ENCODE measurements at regions of chr19 and their contacts with region 1.

Region 1: GRCh38 chr19:58278157-58279041 is at the start of gene ZNF8:
- DNase-seq: peak; percentile 93
- ATAC-seq: peak; percentile 97
- H3K4me3 ChIP-seq: peak within 1 kb of the TSS; percentile 75 to 95
- H3K27ac ChIP-seq: peak within 1 kb of the TSS; percentile 98
- H3K4me1 ChIP-seq: peaks cover 17% of the 10 kb centered on the region
- H3K27me3 ChIP-seq: no peaks in the 10 kb centered on the region
- CTCF ChIP-seq: no peak
- total RNA-seq, gene ZNF8: 12.6 TPM

Region 2: DNA sequence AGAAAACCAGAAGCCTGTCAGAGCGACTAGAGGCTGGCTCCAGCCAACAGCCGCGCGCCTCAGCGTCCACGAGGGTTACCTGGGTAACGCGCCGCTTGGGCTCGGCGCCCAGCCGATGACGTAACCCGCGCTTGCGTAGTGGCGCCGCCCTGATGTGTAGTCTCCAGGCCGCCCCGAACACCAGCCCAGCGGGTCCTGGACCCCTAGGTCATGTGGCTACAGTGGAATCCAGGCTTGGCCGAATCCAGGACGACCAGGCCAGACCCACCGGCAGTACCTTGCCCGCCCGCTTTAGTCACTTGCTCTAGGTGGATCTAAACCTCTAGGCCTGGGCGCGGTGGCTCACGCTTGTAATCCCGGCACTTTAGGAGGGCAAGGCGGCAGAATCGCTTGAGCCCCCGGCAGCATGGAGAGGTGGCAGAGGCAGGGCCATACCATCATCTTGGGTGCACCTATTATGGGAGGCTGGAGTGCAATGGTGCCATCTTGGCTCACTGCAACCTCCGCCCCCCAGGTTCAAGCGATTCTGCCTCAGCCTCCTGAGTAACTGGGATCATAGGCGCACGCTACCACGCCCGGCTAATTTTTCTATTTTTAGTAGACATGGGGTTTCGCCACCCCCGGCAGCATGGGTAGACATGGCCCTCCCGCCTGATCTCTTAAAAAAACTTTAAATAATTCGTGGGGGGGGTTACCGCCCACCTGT is 268.6 kb before region 1 on chr19:
- CTCF ChIA-PET with region 1: no interaction called
- POLR2A ChIA-PET with region 1: no interaction called
- in situ Hi-C with region 1: no loop called
- intact Hi-C with region 1: no loop called
- DNase-seq: no peak
- ATAC-seq: no peak
- H3K4me3 ChIP-seq: no peak overlapping the region
- H3K27ac ChIP-seq: no peak overlapping the region
- H3K4me1 ChIP-seq: no peaks in the 10 kb centered on the region
- H3K27me3 ChIP-seq: no peaks in the 10 kb centered on the region
- CTCF ChIP-seq: no peak

Region 3: DNA sequence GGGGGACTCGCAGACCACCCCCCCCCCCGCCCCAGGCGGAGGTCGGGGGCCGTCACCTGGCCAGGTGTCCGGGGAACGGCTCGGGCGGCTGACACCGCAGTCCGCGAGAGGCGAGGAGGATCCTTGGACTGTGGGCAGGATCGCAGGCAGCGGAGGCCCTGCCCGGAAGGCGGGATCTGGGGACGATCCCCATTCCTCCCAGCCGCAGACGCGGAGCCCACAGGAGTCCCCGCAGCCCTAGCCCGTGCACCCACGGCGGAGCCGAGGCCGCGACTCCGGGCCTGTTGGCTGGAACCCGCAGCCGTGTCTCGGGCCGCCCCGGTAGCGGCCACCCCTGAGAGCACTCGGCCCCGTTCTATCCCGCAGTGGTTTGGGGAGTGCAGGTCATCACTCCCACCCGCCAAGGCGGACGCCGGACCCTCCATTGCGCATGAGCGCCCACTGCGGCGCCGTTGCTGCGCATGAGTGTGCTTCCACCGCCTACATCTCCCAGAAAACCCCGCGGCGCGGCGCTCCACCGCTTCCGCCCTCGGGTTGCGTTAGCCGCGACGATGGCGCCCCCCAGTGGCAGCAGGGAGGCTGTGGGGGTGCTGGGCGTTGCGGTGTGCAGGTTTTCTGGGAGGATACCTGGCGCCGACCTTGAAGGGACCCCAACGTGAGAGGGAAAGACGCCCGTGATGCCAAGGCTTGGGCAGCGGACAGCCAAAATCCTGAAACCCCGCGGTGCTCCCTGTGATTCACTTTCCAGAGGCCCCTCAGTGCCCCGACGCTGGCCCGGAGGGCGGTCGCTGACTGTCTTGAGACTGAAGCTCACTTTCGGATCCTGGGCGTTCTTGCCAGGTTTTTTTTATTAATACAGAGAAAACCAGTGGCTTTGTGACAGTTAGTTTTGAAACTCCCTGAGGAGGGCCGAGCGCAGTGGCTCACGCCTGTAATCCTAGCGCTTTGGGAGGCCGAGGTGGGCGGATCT is 123.4 kb before region 1 on chr19:
- CTCF ChIA-PET with region 1: no interaction called
- POLR2A ChIA-PET with region 1: interaction called, 10 read pairs
- in situ Hi-C with region 1: no loop called
- intact Hi-C with region 1: no loop called
- DNase-seq: peak; percentile 10
- ATAC-seq: peak; percentile 84
- H3K4me3 ChIP-seq: peak overlapping the region; percentile 53 to 55
- H3K27ac ChIP-seq: peak overlapping the region; percentile 18; the same call in 1 of the 2 replicates
- H3K4me1 ChIP-seq: no peaks in the 10 kb centered on the region
- H3K27me3 ChIP-seq: no peaks in the 10 kb centered on the region
- CTCF ChIP-seq: peak; percentile 85; the same call in 1 of the 2 replicates

Region 4: DNA sequence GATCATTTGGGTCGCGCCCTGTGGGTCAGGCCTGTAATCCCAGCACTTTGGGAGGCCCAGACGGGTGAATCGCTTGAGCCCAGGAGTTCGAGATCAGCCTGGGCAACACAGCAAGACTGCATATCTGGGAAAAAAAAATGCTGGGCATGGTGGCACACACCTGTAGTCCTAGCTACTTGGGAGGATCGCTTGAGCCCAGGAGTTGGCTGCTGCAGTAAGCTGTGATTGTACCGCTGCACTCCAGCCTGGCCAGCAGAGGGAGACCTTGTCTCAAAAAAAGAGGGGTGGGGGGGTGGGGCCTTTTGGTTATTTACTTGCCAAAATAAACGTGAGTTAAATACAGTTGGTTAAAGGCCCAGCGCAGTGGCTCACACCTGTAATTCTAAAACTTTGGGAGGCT is 59.5 kb before region 1 on chr19:
- CTCF ChIA-PET with region 1: no interaction called
- POLR2A ChIA-PET with region 1: no interaction called
- in situ Hi-C with region 1: no loop called
- intact Hi-C with region 1: no loop called
- DNase-seq: no peak
- ATAC-seq: peak; percentile 66
- H3K4me3 ChIP-seq: no peak overlapping the region
- H3K27ac ChIP-seq: no peak overlapping the region
- H3K4me1 ChIP-seq: no peaks in the 10 kb centered on the region
- H3K27me3 ChIP-seq: no peaks in the 10 kb centered on the region
- CTCF ChIP-seq: no peak

Region 5: GRCh38 chr19:58243351-58243750 is 35.0 kb before region 1 on chr19:
- CTCF ChIA-PET with region 1: no interaction called
- POLR2A ChIA-PET with region 1: interaction called, 11 read pairs
- in situ Hi-C with region 1: no loop called
- intact Hi-C with region 1: no loop called
- DNase-seq: no peak
- ATAC-seq: 0 out of 2 replicates have a peak, but pooled peaks have one; percentile 7
- H3K4me3 ChIP-seq: no peak overlapping the region
- H3K27ac ChIP-seq: no peak overlapping the region
- H3K4me1 ChIP-seq: no peaks in the 10 kb centered on the region
- H3K27me3 ChIP-seq: no peaks in the 10 kb centered on the region
- CTCF ChIP-seq: no peak

Region 6: DNA sequence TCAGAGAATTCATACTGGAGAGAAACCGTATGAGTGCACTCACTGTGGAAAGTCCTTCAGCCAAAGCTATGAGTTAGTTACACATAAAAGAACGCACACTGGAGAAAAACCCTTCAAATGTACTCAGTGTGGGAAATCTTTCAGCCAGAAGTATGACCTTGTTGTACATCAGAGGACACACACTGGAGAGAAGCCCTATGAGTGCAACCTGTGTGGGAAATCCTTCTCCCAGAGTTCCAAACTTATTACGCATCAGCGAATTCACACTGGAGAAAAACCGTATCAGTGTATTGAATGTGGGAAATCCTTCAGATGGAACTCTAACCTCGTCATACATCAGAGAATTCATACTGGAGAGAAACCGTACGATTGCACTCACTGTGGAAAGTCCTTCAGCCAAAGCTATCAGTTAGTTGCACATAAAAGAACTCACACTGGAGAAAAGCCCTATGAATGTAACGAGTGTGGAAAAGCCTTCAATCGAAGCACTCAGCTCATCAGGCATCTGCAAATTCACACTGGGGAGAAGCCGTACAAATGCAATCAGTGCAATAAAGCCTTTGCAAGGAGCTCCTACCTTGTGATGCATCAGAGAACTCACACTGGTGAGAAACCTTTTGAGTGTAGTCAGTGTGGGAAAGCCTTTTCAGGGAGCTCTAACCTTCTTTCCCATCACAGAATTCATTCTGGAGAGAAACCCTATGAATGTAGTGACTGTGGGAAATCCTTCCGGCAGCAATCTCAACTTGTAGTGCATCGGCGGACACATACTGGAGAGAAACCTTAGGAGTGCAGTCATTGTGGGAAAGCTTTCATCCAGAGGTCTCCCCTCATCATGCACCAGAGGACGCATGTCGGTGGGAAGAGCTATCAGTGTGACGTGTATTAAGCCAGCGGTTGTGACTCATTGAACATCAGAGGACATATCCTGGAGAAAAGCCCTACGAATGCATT is 16.2 kb before region 1 on chr19:
- CTCF ChIA-PET with region 1: no interaction called
- POLR2A ChIA-PET with region 1: no interaction called
- in situ Hi-C with region 1: no loop called
- intact Hi-C with region 1: no loop called
- DNase-seq: no peak
- ATAC-seq: no peak
- H3K4me3 ChIP-seq: no peak overlapping the region
- H3K27ac ChIP-seq: no peak overlapping the region
- H3K4me1 ChIP-seq: no peaks in the 10 kb centered on the region
- H3K27me3 ChIP-seq: no peaks in the 10 kb centered on the region
- CTCF ChIP-seq: no peak

Region 7: GRCh38 chr19:58296104-58296503 is 17.7 kb after region 1 on chr19:
- CTCF ChIA-PET with region 1: no interaction called
- POLR2A ChIA-PET with region 1: interaction called, 11 read pairs
- in situ Hi-C with region 1: no loop called
- intact Hi-C with region 1: no loop called
- DNase-seq: no peak
- ATAC-seq: no peak
- H3K4me3 ChIP-seq: no peak overlapping the region
- H3K27ac ChIP-seq: no peak overlapping the region
- H3K4me1 ChIP-seq: no peaks in the 10 kb centered on the region
- H3K27me3 ChIP-seq: no peaks in the 10 kb centered on the region
- CTCF ChIP-seq: no peak

Region 8: DNA sequence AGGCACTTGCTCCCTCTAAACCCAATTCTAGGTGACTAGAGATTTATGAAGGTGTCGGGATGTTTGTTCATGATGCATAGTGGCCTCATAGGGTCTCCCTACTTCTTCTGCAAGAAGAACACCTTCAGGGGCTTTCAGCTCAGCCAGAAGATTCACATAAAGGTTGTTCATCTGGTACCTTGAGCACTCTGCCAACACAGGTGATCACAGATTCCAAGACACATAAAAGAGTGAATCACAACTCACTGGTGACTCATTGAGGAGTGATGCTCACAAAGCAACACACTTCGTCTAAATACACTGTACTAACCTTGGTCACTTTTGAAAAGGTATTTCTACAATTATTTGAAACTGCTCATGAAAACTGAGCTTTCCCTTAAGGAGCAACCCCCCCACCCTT is 181.6 kb after region 1 on chr19:
- CTCF ChIA-PET with region 1: no interaction called
- POLR2A ChIA-PET with region 1: no interaction called
- in situ Hi-C with region 1: no loop called
- intact Hi-C with region 1: no loop called
- DNase-seq: no peak
- ATAC-seq: no peak
- H3K4me3 ChIP-seq: no peak overlapping the region
- H3K27ac ChIP-seq: no peak overlapping the region
- H3K4me1 ChIP-seq: no peaks in the 10 kb centered on the region
- H3K27me3 ChIP-seq: no peaks in the 10 kb centered on the region
- CTCF ChIP-seq: no peak

Region 9: DNA sequence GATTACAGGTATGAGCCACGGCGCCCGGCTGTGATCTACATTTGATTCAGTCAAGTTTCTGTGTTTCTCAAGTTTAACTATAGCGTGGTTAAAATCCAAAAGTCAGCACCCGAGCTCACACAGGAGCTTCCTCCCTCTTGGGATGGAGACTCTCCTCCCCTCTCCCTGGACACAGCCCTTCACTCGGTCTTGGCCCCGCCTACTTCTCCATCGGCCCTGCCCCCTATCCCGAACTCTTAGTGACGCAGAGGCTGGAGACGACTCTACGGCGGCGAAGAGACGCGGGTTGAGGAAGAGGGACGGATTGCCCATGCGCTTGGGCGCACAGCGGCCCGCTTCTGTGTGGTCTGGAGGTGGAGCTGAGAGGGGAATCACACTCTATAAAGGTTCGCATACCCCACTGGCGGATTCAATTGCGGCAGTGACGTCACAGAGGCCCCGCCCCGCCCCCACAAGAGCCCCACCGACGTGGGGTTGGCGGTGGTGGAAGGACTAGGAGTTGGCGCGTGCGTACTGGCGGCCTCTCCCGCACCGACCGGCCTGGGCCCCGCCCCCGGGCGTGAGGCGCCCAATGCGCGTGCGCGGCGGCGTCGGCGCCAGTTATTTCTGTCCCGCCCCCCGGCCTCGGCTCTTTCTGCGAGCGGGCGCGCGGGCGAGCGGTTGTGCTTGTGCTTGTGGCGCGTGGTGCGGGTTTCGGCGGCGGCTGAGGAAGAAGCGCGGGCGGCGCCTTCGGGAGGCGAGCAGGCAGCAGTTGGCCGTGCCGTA is 265.6 kb after region 1 on chr19 and contains the start of gene TRIM28:
- CTCF ChIA-PET with region 1: interaction called, 10 read pairs
- POLR2A ChIA-PET with region 1: no interaction called
- in situ Hi-C with region 1: no loop called
- intact Hi-C with region 1: no loop called
- DNase-seq: peak; percentile 97
- ATAC-seq: peak; percentile 97
- H3K4me3 ChIP-seq: peak within 1 kb of the TSS; percentile 91 to 100
- H3K27ac ChIP-seq: peak within 1 kb of the TSS; percentile 96
- H3K4me1 ChIP-seq: peaks cover 10% of the 10 kb centered on the region
- H3K27me3 ChIP-seq: peaks cover 4% of the 10 kb centered on the region
- CTCF ChIP-seq: no peak
- total RNA-seq, gene TRIM28: 767 TPM